Tibial artery (tissue), 4 donors: ENCODE measurements at regions of chr21 and their contacts with region 1.

Region 1: DNA sequence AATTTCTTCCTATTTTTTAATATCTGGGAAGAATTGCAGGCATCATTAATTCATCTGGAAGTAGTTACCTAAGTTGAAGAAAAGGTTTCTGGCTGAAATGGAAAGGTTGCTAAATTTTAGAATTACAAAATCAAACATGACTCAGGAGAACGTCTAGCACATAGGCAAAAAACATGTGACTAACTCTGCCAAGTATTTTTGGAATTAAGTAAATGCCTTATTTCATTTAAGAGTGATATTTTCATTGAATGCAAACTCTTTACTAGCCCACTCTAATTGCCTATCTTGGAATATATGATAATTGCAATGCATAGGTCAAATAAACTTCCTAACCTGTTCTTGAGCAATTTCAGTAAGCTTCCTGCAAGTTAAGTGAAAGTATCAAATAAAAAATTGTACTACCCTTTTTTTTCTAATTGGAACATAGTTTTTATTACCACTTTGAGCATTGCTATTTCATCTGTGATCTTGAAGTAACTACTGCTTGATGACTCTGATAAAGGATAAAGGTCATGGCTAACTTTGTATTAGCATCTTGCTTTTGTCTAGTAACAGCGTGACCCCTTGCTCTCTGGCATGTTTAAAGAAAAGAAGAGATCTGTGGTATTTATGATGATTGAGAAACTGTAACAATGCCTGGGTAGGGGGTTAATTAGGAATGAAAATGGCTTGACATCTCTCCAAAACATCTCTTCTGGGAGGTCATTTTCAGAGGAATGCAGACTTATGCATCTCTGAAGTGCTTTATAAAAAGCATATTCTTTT is 208.3 kb upstream of the NCAM2 start:
- DNase-seq: no peak
- H3K4me3 ChIP-seq: no peak overlapping the region
- H3K27ac ChIP-seq: no peak overlapping the region
- H3K4me1 ChIP-seq: no peaks in the 10 kb centered on the region
- H3K27me3 ChIP-seq: no peaks in the 10 kb centered on the region
- CTCF ChIP-seq: no peak

Region 2: GRCh38 chr21:20163167-20163566 is 626.8 kb before region 1 on chr21:
- intact Hi-C with region 1: no loop called
- DNase-seq: no peak
- H3K4me3 ChIP-seq: no peak overlapping the region
- H3K27ac ChIP-seq: no peak overlapping the region
- H3K4me1 ChIP-seq: no peaks in the 10 kb centered on the region
- H3K27me3 ChIP-seq: no peaks in the 10 kb centered on the region
- CTCF ChIP-seq: no peak

Region 3: DNA sequence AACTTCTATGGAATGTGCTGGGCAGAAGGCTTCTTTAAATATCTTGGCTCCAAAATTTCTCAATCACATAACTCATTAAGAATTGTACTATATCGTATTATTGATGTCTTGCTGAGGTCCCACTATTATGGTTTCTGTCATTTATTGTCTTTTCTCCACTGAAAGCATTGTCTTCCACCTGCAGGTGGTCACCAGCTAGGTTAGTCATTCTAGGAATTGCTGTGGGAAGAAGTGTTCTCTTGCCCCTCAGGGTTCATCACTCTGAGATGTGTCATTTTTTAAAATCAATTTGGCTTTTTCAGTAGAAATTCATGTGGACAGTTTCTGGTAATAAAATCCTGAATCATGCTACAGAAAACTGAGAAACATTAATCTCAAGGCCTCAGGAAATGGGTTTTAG is 274.4 kb after region 1 on chr21:
- intact Hi-C with region 1: no loop called
- DNase-seq: no peak
- H3K4me3 ChIP-seq: no peak overlapping the region
- H3K27ac ChIP-seq: no peak overlapping the region
- H3K4me1 ChIP-seq: no peaks in the 10 kb centered on the region
- H3K27me3 ChIP-seq: no peaks in the 10 kb centered on the region
- CTCF ChIP-seq: no peak

Region 4: DNA sequence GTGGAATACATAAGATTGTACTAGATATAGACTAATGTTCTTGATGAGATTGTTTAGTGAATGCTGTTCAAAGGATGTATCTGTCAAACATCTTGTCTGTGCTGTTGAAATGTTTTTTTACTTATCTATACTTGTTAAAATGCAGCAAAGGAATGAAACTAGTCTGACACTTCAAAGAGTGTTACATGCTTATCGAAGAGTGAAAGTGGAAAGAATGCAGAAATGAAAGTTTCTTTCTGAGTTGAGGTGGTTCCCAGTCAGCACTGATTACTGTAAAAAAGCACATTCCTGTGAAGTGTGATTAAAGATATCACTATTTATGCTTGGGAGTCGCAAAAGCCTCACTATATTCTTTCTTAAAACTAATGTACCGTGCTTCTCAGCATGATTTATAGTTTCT is 1433.5 kb after region 1 on chr21:
- intact Hi-C with region 1: loop called (anchors 5 kb)
- DNase-seq: no peak
- H3K4me3 ChIP-seq: no peak overlapping the region
- H3K27ac ChIP-seq: no peak overlapping the region
- H3K4me1 ChIP-seq: no peaks in the 10 kb centered on the region
- H3K27me3 ChIP-seq: no peaks in the 10 kb centered on the region
- CTCF ChIP-seq: no peak

Region 5: DNA sequence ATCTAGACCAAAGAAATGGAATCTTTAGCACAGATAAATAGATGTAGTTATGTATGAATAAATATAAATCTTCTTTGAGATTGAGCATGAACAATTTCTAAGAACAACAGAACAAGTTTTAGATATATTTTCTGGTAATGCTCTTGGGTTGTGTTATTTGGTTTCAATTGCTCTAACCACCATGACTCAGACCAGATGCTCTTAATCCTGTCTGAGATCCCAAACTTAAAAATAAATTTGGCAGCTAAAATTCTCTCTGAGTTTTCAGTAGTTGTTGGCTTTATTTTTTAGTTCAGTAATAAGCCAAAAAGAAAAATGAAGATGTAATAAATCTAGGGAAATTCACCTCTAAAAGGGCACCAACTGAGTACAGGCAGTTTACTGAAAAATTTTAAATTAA is 1901.7 kb after region 1 on chr21:
- intact Hi-C with region 1: no loop called
- DNase-seq: no peak
- H3K4me3 ChIP-seq: no peak overlapping the region
- H3K27ac ChIP-seq: no peak overlapping the region
- H3K4me1 ChIP-seq: no peaks in the 10 kb centered on the region
- H3K27me3 ChIP-seq: no peaks in the 10 kb centered on the region
- CTCF ChIP-seq: no peak